ENCODE measurements at regions of chr4 and their contacts with region 1.

Region 1: DNA sequence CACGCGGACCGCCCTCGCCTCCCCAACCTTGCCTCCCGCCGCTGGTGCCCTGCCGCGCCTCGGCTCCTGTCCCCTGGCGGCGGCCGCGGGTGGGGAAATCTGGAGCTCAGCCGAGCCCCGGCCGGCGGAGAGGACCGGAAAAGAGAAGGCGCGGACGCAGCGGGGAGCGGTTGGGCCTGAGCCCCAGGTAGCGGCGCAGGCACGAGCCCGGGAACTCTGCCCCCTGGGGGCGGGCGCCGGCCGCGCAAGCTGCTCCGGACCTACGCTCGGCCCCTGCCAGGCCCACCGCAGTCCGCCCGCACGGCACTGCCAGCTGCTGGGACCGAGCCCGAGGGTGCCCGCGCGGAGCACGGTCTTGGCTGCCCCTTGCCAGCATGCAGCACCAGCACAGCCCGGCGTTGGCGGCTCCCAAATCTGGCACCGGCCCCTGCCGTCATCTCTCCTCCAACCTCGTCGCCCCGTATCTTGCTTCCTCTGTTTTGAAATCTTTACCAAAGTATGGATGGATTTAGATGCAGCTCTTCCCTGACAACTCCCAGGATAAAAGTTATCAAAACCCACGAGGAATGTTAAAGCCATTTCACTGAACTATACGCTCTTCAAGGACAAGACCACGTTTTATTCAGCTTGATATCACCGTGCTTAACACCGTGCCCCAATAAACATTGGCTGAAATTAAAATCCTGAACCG is at the start of gene PRSS12:
- DNase-seq: peak; percentile 57 to 94
- H3K4me3 ChIP-seq: peak within 1 kb of the TSS; percentile 45 to 67 (median 57)
- H3K27ac ChIP-seq: no peak within 1 kb of the TSS
- H3K4me1 ChIP-seq: peaks cover 0 to 7% (median 0%) of the 10 kb centered on the region in 4 experiments; a peak in 3 of 7 replicates
- H3K27me3 ChIP-seq: peaks cover 0 to 15% (median 10%) of the 10 kb centered on the region in 4 experiments; a peak in 5 of 7 replicates
- CTCF ChIP-seq: peak; percentile 71 to 85 (median 76)
- EP300 ChIP-seq: no peak
- POLR2A ChIP-seq: no peak
- RAD21 ChIP-seq: peak; percentile 40 to 62; a peak in 3 of 4 replicates
- total RNA-seq, gene PRSS12: 7.1 and 9.3 TPM in 2 replicates

Region 2: DNA sequence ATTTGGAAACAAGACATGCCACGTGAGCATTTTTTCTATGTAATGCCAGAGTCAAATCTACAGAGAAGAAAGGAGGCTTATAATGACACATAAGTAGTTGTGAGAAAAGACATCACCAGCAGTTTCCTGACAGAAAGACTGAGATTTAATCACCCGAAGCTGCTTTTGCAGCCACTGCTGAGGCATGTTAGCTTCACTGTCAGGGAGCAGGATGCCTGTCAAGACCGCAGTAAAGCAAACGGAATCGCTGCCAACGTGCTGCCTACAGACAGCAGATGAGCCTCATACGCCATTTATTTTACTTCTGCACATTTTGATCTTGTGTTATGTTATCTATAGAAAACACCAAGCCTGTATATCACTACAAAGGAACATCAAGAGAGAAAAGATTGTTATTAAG is 387.4 kb before region 1 on chr4:
- CTCF ChIA-PET with region 1: no interaction called
- POLR2A ChIA-PET with region 1: no interaction called
- DNase-seq: no peak
- H3K4me3 ChIP-seq: no peak overlapping the region
- H3K27ac ChIP-seq: no peak overlapping the region
- H3K4me1 ChIP-seq: no peaks in the 10 kb centered on the region
- H3K27me3 ChIP-seq: no peaks in the 10 kb centered on the region
- CTCF ChIP-seq: no peak
- EP300 ChIP-seq: no peak
- POLR2A ChIP-seq: no peak
- RAD21 ChIP-seq: no peak

Region 3: GRCh38 chr4:118099106-118099505 is 253.9 kb before region 1 on chr4:
- CTCF ChIA-PET with region 1: no interaction called
- POLR2A ChIA-PET with region 1: no interaction called
- DNase-seq: no peak
- H3K4me3 ChIP-seq: no peak overlapping the region
- H3K27ac ChIP-seq: no peak overlapping the region
- H3K4me1 ChIP-seq: no peaks in the 10 kb centered on the region
- H3K27me3 ChIP-seq: no peaks in the 10 kb centered on the region
- CTCF ChIP-seq: no peak
- EP300 ChIP-seq: no peak
- POLR2A ChIP-seq: no peak
- RAD21 ChIP-seq: no peak

Region 4: GRCh38 chr4:118139241-118139640 is 213.7 kb before region 1 on chr4:
- CTCF ChIA-PET with region 1: no interaction called
- POLR2A ChIA-PET with region 1: no interaction called
- DNase-seq: no peak
- H3K4me3 ChIP-seq: no peak overlapping the region
- H3K27ac ChIP-seq: no peak overlapping the region
- H3K4me1 ChIP-seq: no peaks in the 10 kb centered on the region
- H3K27me3 ChIP-seq: no peaks in the 10 kb centered on the region
- CTCF ChIP-seq: no peak
- EP300 ChIP-seq: no peak
- POLR2A ChIP-seq: no peak
- RAD21 ChIP-seq: no peak

Region 5: DNA sequence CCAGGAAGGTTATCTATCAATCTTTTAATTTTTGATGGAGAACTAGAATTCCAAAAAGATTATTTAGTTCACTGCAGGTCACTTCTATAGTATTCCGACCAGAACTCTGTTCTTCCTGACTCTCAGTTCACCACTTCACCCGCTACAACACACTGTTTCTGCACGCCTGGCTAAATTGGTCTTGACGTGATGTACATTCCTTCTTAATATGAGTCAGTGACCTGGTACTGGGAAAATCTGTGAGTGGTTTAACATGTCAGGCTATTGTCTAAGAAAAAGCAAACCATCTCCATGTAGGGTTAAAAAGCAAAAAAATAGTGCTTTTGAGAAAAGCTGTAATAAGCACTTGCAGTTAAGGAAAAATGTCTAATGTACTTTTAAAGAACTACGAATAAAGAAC is 198.3 kb before region 1 on chr4:
- CTCF ChIA-PET with region 1: no interaction called
- POLR2A ChIA-PET with region 1: no interaction called
- DNase-seq: no peak
- H3K4me3 ChIP-seq: no peak overlapping the region
- H3K27ac ChIP-seq: no peak overlapping the region
- H3K4me1 ChIP-seq: no peaks in the 10 kb centered on the region
- H3K27me3 ChIP-seq: no peaks in the 10 kb centered on the region
- CTCF ChIP-seq: no peak
- EP300 ChIP-seq: no peak
- POLR2A ChIP-seq: no peak
- RAD21 ChIP-seq: no peak

Region 6: GRCh38 chr4:118338981-118339765 is 13.8 kb before region 1 on chr4:
- CTCF ChIA-PET with region 1: interaction called, 62 read pairs
- POLR2A ChIA-PET with region 1: interaction called, 8 read pairs
- DNase-seq: no peak
- H3K4me3 ChIP-seq: no peak overlapping the region
- H3K27ac ChIP-seq: no peak overlapping the region
- H3K4me1 ChIP-seq: peaks cover 0 to 6% (median 2%) of the 10 kb centered on the region in 4 experiments; a peak in 3 of 7 replicates
- H3K27me3 ChIP-seq: no peaks in the 10 kb centered on the region
- CTCF ChIP-seq: no peak
- EP300 ChIP-seq: no peak
- POLR2A ChIP-seq: no peak
- RAD21 ChIP-seq: no peak

Region 7: GRCh38 chr4:118367872-118368271 is 14.9 kb after region 1 on chr4:
- CTCF ChIA-PET with region 1: interaction called, 21 read pairs
- POLR2A ChIA-PET with region 1: no interaction called
- DNase-seq: no peak
- H3K4me3 ChIP-seq: no peak overlapping the region
- H3K27ac ChIP-seq: no peak overlapping the region
- H3K4me1 ChIP-seq: no peaks in the 10 kb centered on the region
- H3K27me3 ChIP-seq: no peaks in the 10 kb centered on the region
- CTCF ChIP-seq: no peak
- EP300 ChIP-seq: no peak
- POLR2A ChIP-seq: no peak
- RAD21 ChIP-seq: no peak